ENCODE measurements at regions of chr15 and their contacts with region 1.

Region 1: DNA sequence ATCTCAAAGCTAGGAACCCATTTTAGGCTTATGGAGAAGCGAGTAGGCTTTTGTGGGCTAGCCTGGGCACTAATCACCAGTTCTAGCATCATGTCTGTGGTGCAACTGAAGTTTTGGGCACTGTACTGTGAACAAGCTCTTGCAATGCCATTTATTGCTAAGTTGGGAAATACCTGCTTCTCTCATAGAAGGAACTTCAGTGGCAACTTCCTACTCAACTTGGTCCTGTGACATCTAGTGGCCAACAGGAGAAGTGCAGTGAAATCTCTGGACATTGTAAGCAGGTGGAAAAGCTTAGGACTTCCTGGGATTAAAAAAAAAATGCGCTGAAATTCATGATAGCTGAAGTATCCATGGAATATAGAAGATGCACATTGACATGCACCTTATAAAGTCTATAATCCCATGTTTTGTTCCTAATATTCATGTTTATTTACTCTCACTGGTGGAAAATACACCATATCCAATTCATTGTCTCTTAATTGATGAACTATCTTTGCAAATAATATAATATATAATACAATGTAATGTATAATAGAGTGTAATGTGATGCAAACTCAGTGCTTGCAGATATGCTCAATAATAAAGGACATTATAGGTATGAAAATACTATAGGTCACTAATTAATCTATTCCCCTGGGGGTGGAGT is 6.5 kb upstream of the ALDH1A3 start:
- DNase-seq: peak; percentile 83
- ATAC-seq: peak; percentile 60
- H3K4me3 ChIP-seq: no peak overlapping the region
- H3K27ac ChIP-seq: no peak overlapping the region
- H3K4me1 ChIP-seq: peaks cover 12 to 36% of the 10 kb centered on the region in 2 experiments
- H3K27me3 ChIP-seq: no peaks in the 10 kb centered on the region
- CTCF ChIP-seq: peak; percentile 82 to 94 (median 83)
- POLR2A ChIP-seq: no peak
- RAD21 ChIP-seq: peak; percentile 85

Region 2: DNA sequence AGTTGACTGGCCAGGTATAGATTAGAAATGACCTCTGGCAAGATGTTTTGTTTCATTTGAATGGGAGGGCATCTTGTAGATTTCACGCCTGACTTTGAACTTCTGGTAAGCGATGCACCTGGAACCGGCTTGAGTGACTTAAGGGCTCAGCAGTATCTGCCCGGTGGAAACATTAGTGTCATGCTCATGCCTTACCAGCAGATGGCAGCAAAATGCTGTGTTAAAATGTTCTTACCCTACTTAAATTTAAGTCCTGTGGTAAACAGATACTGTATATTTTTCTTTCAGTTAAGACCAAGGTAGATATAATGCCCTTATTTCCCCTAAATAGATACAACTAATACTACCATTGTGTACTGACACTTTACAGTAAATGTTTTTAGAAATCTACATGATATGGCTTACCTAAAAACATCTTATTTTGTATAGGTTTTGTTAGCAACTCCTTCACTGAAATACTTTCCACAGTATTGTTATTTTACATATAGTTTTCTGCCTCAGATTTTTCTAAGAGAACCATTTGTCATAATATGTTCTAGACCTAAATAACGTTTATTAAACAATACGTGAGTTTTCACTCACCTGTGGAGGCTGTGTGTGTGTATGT is 245.3 kb before region 1 on chr15:
- CTCF ChIA-PET with region 1: interaction called, 9 read pairs
- POLR2A ChIA-PET with region 1: no interaction called
- RAD21 ChIA-PET with region 1: interaction called in 1 of 2 experiments, 6 read pairs
- intact Hi-C with region 1: loop called (anchors 1 kb)
- DNase-seq: peak; percentile 69
- ATAC-seq: peak; percentile 92
- H3K4me3 ChIP-seq: no peak overlapping the region
- H3K27ac ChIP-seq: no peak overlapping the region
- H3K4me1 ChIP-seq: no peaks in the 10 kb centered on the region
- H3K27me3 ChIP-seq: no peaks in the 10 kb centered on the region
- CTCF ChIP-seq: peak; percentile 69 to 84 (median 73)
- POLR2A ChIP-seq: no peak
- RAD21 ChIP-seq: peak; percentile 86

Region 3: GRCh38 chr15:100671858-100672543 is 201.2 kb before region 1 on chr15:
- CTCF ChIA-PET with region 1: interaction called, 38 read pairs
- POLR2A ChIA-PET with region 1: no interaction called
- RAD21 ChIA-PET with region 1: interaction called, 7 to 8 read pairs
- intact Hi-C with region 1: loop called (anchors 1 kb)
- DNase-seq: peak; percentile 37
- ATAC-seq: peak; percentile 98
- H3K4me3 ChIP-seq: no peak overlapping the region
- H3K27ac ChIP-seq: peak overlapping the region; percentile 6; the same call in 1 of the 2 replicates
- H3K4me1 ChIP-seq: peaks cover 0 to 29% of the 10 kb centered on the region in 2 experiments; a peak in 2 of 4 replicates
- H3K27me3 ChIP-seq: no peaks in the 10 kb centered on the region
- CTCF ChIP-seq: peak; percentile 77 to 88 (median 87)
- POLR2A ChIP-seq: no peak
- RAD21 ChIP-seq: peak; percentile 96

Region 4: GRCh38 chr15:100721770-100722550 is 151.2 kb before region 1 on chr15:
- CTCF ChIA-PET with region 1: interaction called, 8 read pairs
- POLR2A ChIA-PET with region 1: interaction called, 4 read pairs
- RAD21 ChIA-PET with region 1: no interaction called
- intact Hi-C with region 1: loop called (anchors 5 kb)
- DNase-seq: peak; percentile 97
- ATAC-seq: peak; percentile 77
- H3K4me3 ChIP-seq: peak overlapping the region; percentile 6; a peak in 2 of 4 replicates
- H3K27ac ChIP-seq: peak overlapping the region; percentile 94
- H3K4me1 ChIP-seq: peaks cover 56 to 88% of the 10 kb centered on the region in 2 experiments
- H3K27me3 ChIP-seq: no peaks in the 10 kb centered on the region
- CTCF ChIP-seq: no peak
- POLR2A ChIP-seq: no peak
- RAD21 ChIP-seq: no peak

Region 5: GRCh38 chr15:100737214-100737613 is 135.9 kb before region 1 on chr15:
- CTCF ChIA-PET with region 1: interaction called, 14 read pairs
- POLR2A ChIA-PET with region 1: no interaction called
- RAD21 ChIA-PET with region 1: no interaction called
- intact Hi-C with region 1: loop called (anchors 1 kb)
- DNase-seq: no peak
- ATAC-seq: no peak
- H3K4me3 ChIP-seq: no peak overlapping the region
- H3K27ac ChIP-seq: no peak overlapping the region
- H3K4me1 ChIP-seq: peaks cover 16 to 43% of the 10 kb centered on the region in 2 experiments
- H3K27me3 ChIP-seq: no peaks in the 10 kb centered on the region
- CTCF ChIP-seq: no peak
- POLR2A ChIP-seq: no peak
- RAD21 ChIP-seq: no peak